HAP-1 (cell line): ENCODE measurements at regions of chr16 and their contacts with region 1.

Region 1: GRCh38 chr16:19907161-19907992 is 22.7 kb upstream of the GPRC5B start:
- DNase-seq: peak; percentile 74 to 84
- H3K4me3 ChIP-seq: no peak overlapping the region
- H3K4me1 ChIP-seq: no peaks in the 10 kb centered on the region
- H3K27me3 ChIP-seq: no peaks in the 10 kb centered on the region

Region 2: GRCh38 chr16:19974607-19975006 is 67.2 kb after region 1 on chr16:
- in situ Hi-C with region 1: loop called (anchors 10 kb)
- DNase-seq: no peak
- H3K4me3 ChIP-seq: no peak overlapping the region
- H3K4me1 ChIP-seq: no peaks in the 10 kb centered on the region
- H3K27me3 ChIP-seq: no peaks in the 10 kb centered on the region

Region 3: DNA sequence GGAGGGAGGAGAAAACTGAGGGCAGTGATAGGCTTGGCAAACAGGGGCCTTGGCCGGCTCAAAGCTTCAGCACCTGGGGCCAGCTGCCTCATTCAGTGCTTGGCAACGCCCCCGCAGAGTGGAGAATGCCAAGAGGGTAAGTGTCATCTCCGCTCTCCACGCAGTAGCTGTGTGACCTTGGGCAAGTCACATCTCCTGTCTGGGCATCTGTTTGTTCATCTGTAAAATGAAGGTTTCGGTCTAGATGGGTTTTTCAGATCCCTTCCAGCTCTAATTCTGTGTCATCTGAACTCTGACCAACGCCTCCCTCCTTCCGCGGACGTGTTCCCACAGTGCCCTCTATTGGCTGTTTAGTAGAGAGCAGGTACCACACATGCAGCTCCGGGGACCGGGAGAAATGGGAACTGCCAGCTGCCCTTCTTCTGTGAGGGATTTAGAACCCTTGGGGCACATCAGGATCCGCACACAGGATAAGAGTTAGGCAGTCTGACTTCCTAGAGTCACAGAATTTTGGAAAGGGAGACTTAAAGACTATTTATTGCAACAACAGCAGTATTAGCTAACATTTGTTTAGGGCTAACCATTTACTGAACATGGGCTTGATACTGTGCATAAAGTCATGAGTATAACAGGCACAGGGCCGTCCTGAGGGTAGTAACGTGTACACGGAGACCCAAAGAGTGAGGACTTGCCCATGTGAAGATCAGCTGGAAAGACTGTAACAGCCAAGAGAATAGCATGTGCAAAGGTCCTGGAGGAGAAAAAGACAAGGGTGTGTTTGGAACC is 393.1 kb after region 1 on chr16:
- in situ Hi-C with region 1: loop called (anchors 5 kb)
- DNase-seq: peak; percentile 57 to 64
- H3K4me3 ChIP-seq: no peak overlapping the region
- H3K4me1 ChIP-seq: no peaks in the 10 kb centered on the region
- H3K27me3 ChIP-seq: no peaks in the 10 kb centered on the region; the same call in 1 of the 2 replicates

Region 4: DNA sequence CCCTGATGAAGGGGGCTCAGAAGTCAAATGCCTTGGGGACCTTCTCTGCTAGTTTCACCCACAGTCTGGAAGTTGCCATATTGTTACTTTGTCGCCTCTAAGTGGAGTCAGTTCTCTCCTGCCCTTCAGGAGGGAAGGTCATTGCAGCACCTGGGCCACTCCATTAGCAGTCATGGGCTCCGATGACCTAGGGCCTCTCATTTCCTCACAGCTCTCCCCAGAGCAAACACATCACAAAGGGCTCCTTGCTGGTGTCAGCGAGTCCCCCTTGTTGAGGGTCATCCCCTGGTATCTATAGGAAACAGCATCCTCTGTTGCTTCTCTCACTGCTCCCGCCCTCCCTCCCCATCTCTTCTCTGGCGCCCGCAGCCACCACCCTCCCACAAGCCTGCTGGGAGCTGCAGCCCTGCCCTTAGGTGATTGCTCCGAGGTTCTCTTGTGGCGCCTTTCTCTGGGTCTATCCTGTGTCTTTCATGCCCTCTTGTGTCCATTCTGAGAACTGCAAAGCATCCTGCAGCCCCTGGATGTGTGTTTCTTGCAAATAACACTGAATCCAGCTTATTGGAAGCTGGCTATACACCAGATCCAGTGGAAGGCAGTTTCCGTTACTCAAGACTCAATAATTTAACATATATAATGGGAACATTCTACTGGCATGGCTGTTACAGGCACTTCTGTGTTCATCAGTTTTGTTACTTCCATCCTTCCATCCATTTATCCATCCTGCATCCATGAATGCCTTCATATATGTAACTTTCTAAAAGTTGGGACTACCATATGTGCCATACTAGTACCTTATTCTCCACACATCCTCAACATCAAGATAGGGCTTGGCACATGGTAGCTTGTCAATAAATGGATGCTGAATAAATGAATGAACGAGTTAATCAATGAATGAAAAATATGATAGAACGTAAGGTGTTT is 476.0 kb after region 1 on chr16:
- in situ Hi-C with region 1: loop called (anchors 5 kb)
- DNase-seq: peak; percentile 66 to 79
- H3K4me3 ChIP-seq: no peak overlapping the region
- H3K4me1 ChIP-seq: no peaks in the 10 kb centered on the region
- H3K27me3 ChIP-seq: no peaks in the 10 kb centered on the region

Region 5: DNA sequence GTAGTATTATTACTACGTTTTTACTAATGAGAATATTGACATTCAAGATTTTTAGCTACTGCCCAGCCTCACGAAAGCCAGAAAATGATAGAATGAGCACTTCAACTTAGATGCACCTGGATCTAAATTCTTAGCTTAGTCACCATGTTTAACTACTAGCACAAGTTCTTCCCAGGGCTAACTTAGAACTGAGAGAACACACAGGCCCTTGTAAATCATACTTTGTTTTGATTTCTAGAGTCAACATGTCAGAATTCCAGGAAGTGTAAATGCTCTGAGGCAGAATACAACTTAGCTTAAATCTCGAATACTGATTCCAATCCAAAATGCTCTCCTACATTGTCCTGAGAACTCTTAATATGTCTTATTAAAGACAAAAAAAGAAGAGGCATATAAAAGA is 796.9 kb after region 1 on chr16:
- in situ Hi-C with region 1: loop called (anchors 25 kb)
- DNase-seq: no peak
- H3K4me3 ChIP-seq: no peak overlapping the region
- H3K4me1 ChIP-seq: no peaks in the 10 kb centered on the region
- H3K27me3 ChIP-seq: no peaks in the 10 kb centered on the region